Posterior vena cava (tissue), 2 donors: ENCODE measurements at regions of chr9 and their contacts with region 1.

Region 1: DNA sequence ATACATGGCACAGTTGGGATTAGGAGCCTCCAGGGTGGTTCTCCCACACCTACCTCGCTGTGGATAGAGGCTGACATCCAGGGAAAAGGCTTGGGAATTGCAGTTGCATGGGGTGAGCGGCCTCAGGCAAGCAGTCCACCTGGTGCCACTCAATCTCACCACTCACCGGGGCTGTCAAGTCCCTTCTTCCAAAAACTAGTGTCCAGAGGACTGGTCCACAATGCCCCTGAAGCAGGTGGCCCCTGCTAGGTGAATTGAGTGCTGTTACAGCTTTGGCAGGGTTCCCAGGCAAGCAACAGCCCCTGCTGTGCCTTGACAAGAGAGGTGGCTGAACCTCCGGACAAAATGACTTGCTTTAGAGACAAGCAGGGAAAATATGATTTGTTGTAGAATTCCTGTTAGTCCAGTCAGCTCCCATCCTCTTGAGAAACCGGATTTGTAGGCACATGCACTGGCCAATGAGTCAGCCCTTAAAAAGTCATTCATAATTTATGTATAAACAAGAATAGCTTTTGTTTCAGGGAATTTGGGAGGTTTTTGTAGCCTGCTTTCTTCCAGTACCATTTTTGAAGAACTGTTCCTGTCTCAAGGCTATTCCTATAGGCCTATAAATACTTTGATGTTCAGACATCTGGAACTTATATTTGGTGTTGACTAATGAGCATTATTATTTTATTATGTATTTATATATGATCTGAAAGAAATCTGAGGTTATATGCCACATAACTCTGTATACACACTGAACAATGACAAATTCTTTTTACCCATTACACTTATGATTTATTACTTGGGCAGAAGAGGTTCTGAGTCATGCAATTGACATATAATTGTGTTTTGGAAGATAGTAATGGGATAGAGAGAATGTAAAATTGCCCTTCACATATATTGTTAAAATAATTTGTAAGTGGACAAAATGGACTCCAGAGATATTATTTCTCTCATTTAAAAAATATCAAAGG is 411.1 kb downstream of the ACTL7B start:
- DNase-seq: no peak

Region 2: GRCh38 chr9:107732781-107733522 is 711.7 kb before region 1 on chr9:
- intact Hi-C with region 1: loop called in 1 of 2 experiments (anchors 10 kb)
- DNase-seq: no peak

Region 3: GRCh38 chr9:108473211-108474112 is 28.8 kb after region 1 on chr9:
- intact Hi-C with region 1: loop called in 1 of 2 experiments (anchors 2 kb)
- DNase-seq: no peak